Endothelial cell of umbilical vein (primary cell): ENCODE measurements at regions of chr15 and their contacts with region 1.

Region 1: DNA sequence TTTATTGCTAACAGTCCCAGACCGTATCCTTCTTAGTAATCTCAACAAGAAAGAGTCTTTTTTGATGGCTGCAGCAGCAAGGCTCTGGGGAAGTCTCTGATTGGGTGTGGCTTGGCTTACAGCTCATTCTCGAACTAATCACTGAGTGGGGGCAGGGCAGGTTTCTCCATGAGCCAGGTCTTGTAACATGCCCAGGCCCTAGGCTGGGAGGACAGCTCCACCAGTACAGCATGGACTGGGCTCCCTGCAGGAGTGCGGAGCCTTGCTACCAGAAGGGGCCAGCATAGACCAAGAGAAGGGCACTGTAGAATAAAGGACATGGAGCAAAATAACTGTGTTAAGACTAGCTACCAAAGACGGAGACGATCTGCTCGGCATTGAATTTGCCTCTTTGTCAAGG is 7.2 kb downstream of the CD276 start:
- DNase-seq: peak; percentile 25
- H3K4me3 ChIP-seq: no peak overlapping the region
- H3K27ac ChIP-seq: no peak overlapping the region
- H3K4me1 ChIP-seq: peaks cover 41% of the 10 kb centered on the region
- H3K27me3 ChIP-seq: no peaks in the 10 kb centered on the region
- CTCF ChIP-seq: no peak
- POLR2A ChIP-seq: no peak

Region 2: GRCh38 chr15:73677146-73677607 is 14.2 kb before region 1 on chr15:
- CTCF ChIA-PET with region 1: interaction called, 368 read pairs
- POLR2A ChIA-PET with region 1: no interaction called
- dilution Hi-C with region 1: no loop called
- intact Hi-C with region 1: no loop called
- DNase-seq: peak; percentile 70
- H3K4me3 ChIP-seq: no peak overlapping the region
- H3K27ac ChIP-seq: no peak overlapping the region
- H3K4me1 ChIP-seq: no peaks in the 10 kb centered on the region
- H3K27me3 ChIP-seq: peaks cover 12 to 31% of the 10 kb centered on the region in 2 experiments
- CTCF ChIP-seq: peak; percentile 81
- POLR2A ChIP-seq: no peak

Region 3: GRCh38 chr15:73800662-73801345 is 109.4 kb after region 1 on chr15:
- CTCF ChIA-PET with region 1: no interaction called
- POLR2A ChIA-PET with region 1: no interaction called
- dilution Hi-C with region 1: no loop called
- intact Hi-C with region 1: no loop called
- DNase-seq: peak; percentile 36
- H3K4me3 ChIP-seq: no peak overlapping the region
- H3K27ac ChIP-seq: no peak overlapping the region
- H3K4me1 ChIP-seq: no peaks in the 10 kb centered on the region
- H3K27me3 ChIP-seq: peaks cover 0 to 3% of the 10 kb centered on the region in 2 experiments
- CTCF ChIP-seq: no peak
- POLR2A ChIP-seq: no peak

Region 4: DNA sequence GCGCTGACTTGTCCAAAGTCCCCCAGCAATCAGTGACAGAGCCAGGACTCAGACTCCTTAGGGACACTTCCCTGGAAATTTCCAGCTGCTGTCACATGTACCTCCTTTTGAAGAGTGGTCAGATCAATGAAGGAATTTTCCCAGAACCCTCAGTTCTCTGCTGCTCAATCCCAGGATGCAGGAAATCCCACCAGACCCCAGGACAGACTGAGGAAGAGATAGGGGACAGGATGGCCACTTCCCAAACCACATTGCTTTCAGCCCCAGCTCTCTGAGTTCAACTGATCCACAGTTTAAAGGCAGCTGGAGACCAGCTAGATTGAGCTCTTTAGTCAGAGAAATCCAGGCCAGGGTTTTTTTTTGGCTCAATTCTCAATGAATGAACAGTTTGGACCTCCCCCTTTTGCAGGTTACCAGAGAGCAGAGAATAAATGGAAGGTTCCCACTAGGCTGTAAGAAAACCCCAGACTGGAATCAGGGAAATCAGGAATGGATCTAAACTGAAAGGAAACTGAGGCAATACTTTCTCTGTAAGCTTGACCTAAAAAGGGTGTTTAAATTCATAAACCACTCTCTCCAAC is 1032.4 kb after region 1 on chr15:
- CTCF ChIA-PET with region 1: no interaction called
- POLR2A ChIA-PET with region 1: no interaction called
- dilution Hi-C with region 1: no loop called
- intact Hi-C with region 1: no loop called
- DNase-seq: peak; percentile 62
- H3K4me3 ChIP-seq: no peak overlapping the region
- H3K27ac ChIP-seq: no peak overlapping the region
- H3K4me1 ChIP-seq: peaks cover 12% of the 10 kb centered on the region
- H3K27me3 ChIP-seq: peaks cover 0 to 2% of the 10 kb centered on the region in 2 experiments
- CTCF ChIP-seq: no peak
- POLR2A ChIP-seq: no peak